WTC11 (cell line): ENCODE measurements at regions of chr3 and their contacts with region 1.

Region 1: DNA sequence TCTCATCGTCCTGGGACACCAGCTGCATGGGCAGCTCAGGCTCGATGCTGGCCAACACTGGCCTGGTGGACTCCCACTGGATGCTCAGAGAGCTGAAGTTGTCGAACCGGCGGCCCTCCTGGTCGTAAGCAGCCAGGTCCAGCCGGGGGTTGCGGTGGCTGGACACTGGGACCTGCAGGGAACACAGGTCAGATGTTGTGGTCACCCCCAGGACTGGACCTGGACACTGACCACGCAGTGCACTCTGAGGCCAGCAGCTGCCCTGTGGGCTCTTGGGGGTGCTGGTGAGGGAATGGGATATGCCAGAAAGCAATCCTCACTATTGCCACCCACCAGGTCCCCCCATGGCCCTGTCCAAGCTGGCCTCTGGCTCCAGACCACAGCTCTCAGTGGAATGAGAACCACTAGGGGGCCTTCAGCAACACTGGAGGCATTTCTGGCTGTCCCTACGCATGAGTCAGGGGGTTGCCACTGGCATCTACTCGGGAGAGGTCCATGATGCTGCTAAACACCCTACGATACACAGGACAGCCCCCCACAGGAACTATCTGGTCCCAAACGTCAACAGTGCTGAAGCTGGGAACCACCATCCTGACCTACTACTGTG is 66.1 kb downstream of the NUP210 start:
- DNase-seq: no peak
- ATAC-seq: no peak; the same call in 1 of the 2 replicates
- H3K4me3 Mint-ChIP-seq: no peak overlapping the region
- H3K27ac Mint-ChIP-seq: no peak overlapping the region
- H3K4me1 Mint-ChIP-seq: peaks cover 26% of the 10 kb centered on the region
- H3K27me3 Mint-ChIP-seq: no peaks in the 10 kb centered on the region
- CTCF ChIP-seq: no peak

Region 2: GRCh38 chr3:13364602-13365271 is 10.7 kb after region 1 on chr3:
- CTCF ChIA-PET with region 1: interaction called, 14 read pairs
- POLR2A ChIA-PET with region 1: interaction called, 5 read pairs
- DNase-seq: no peak
- ATAC-seq: peak; percentile 46
- H3K4me3 Mint-ChIP-seq: no peak overlapping the region
- H3K27ac Mint-ChIP-seq: peak overlapping the region; percentile 99
- H3K4me1 Mint-ChIP-seq: peaks cover 25% of the 10 kb centered on the region
- H3K27me3 Mint-ChIP-seq: no peaks in the 10 kb centered on the region
- CTCF ChIP-seq: no peak